Natural killer cell (primary cell): ENCODE measurements at regions of chr12 and their contacts with region 1.

Region 1: GRCh38 chr12:94941440-94941862 is 62.0 kb downstream of the NDUFA12 start:
- DNase-seq: peak; percentile 58 to 72
- ATAC-seq: peak; percentile 78 to 90 (median 85)
- H3K4me3 ChIP-seq: no peak overlapping the region
- H3K4me3 Mint-ChIP-seq: peak overlapping the region; percentile 74
- H3K27ac ChIP-seq: peak overlapping the region; percentile 55
- H3K27ac Mint-ChIP-seq: peak overlapping the region; percentile 90 to 93
- H3K4me1 ChIP-seq: peaks cover 62% of the 10 kb centered on the region
- H3K4me1 Mint-ChIP-seq: peaks cover 61 to 70% of the 10 kb centered on the region in 2 donors
- H3K27me3 ChIP-seq: no peaks in the 10 kb centered on the region
- H3K27me3 Mint-ChIP-seq: no peaks in the 10 kb centered on the region
- CTCF ChIP-seq: no peak

Region 2: DNA sequence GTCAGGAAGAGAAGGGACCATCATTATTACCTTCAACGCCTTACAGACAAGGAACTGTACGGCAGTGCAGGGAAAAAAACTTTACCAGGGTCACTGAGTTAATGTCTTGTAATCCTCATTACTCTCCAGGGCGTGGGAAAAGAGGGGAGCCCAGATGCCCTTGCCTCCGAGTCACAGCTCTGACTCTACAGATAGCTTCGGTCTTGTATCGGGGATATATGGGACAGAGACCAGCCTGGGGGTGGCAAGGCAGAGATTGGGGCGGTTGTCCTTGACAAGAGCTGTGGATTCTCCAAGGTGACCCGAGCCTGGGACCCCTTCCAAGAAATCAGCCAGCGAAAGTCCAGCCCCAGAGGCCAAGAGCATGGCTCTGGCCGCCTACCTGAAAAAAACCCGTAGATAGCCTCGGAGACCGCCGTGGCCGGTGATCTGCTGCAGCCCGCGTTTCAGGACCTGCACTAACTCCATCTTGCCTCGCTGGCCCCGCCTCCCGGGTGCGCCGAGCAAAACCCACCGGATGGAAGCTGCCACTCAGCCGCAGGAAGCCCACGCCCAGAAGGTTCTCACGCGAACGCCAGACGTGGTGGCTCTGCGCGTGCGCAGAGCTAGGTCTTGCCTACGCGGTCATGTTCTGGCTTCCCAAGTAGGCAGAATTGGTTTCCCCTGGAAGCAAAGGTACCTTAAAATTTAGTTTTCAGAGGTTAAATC is 61.9 kb after region 1 on chr12 and contains the start of gene NDUFA12:
- intact Hi-C with region 1: loop called (anchors 1 kb)
- DNase-seq: peak; percentile 89 to 98
- ATAC-seq: peak; percentile 99
- H3K4me3 ChIP-seq: peak within 1 kb of the TSS; percentile 76
- H3K4me3 Mint-ChIP-seq: peak within 1 kb of the TSS; percentile 95
- H3K27ac ChIP-seq: peak within 1 kb of the TSS; percentile 77
- H3K27ac Mint-ChIP-seq: peak within 1 kb of the TSS; percentile 94 to 96
- H3K4me1 ChIP-seq: peaks cover 21% of the 10 kb centered on the region
- H3K4me1 Mint-ChIP-seq: peaks cover 43% of the 10 kb centered on the region in 2 donors
- H3K27me3 ChIP-seq: no peaks in the 10 kb centered on the region
- H3K27me3 Mint-ChIP-seq: no peaks in the 10 kb centered on the region
- CTCF ChIP-seq: no peak
- total RNA-seq, gene NDUFA12: 67.7 to 91.5 (median 69.6) TPM